A549 (cell line): ENCODE measurements at regions of chr19 and their contacts with region 1.

Region 1: GRCh38 chr19:50897191-50897607 is 14.0 kb downstream of the KLK4 start:
- DNase-seq: no peak
- ATAC-seq: 0 out of 6 replicates have a peak, but pooled peaks of 1 of the 2 experiments have one; percentile 10
- H3K4me3 ChIP-seq: no peak overlapping the region
- H3K27ac ChIP-seq: no peak overlapping the region; a peak in 1 of 6 replicates
- H3K4me1 ChIP-seq: peaks cover 6% of the 10 kb centered on the region; the same call in 1 of the 3 replicates
- CTCF ChIP-seq: no peak
- EP300 ChIP-seq: no peak
- POLR2A ChIP-seq: no peak
- RAD21 ChIP-seq: no peak

Region 2: DNA sequence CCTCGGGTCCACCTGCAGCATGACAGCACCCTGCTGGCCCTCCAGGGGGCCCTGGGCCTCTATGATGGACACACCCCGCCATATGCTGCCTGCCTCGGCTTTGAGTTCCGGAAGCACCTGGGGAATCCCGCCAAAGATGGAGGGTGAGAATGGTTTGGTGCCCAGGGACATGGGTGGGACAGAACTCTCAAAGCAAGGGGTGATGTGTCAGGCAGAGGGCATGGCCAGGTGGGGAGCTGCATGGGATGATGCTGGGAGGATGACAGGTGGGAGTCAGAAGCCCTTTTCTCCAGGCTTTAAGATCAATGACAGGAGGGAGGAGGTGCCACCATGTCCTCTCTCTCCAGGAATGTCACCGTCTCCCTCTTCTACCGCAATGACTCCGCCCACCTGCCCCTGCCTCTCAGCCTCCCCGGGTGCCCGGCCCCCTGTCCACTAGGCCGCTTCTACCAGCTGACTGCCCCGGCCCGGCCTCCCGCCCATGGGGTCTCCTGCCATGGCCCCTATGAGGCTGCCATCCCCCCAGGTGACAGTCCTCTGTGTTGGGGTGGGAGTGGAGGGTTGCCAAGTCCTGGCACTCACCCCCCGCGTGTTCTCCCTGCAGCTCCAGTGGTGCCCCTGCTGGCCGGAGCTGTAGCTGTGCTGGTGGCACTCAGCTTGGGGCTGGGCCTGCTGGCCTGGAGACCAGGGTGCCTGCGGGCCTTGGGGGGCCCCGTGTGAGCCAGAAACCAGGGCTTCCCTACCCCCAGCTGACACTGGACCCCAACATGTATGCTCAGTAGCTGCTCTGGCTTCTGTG is 102.6 kb before region 1 on chr19:
- CTCF ChIA-PET with region 1: no interaction called
- POLR2A ChIA-PET with region 1: no interaction called
- DNase-seq: peak; percentile 67 to 76
- ATAC-seq: peak; percentile 31 to 62
- H3K4me3 ChIP-seq: no peak overlapping the region
- H3K27ac ChIP-seq: no peak overlapping the region
- H3K4me1 ChIP-seq: peaks cover 9% of the 10 kb centered on the region; the same call in 2 of the 3 replicates
- CTCF ChIP-seq: no peak; the same call in 2 of the 3 replicates
- EP300 ChIP-seq: no peak
- POLR2A ChIP-seq: peak; percentile 42
- RAD21 ChIP-seq: no peak

Region 3: DNA sequence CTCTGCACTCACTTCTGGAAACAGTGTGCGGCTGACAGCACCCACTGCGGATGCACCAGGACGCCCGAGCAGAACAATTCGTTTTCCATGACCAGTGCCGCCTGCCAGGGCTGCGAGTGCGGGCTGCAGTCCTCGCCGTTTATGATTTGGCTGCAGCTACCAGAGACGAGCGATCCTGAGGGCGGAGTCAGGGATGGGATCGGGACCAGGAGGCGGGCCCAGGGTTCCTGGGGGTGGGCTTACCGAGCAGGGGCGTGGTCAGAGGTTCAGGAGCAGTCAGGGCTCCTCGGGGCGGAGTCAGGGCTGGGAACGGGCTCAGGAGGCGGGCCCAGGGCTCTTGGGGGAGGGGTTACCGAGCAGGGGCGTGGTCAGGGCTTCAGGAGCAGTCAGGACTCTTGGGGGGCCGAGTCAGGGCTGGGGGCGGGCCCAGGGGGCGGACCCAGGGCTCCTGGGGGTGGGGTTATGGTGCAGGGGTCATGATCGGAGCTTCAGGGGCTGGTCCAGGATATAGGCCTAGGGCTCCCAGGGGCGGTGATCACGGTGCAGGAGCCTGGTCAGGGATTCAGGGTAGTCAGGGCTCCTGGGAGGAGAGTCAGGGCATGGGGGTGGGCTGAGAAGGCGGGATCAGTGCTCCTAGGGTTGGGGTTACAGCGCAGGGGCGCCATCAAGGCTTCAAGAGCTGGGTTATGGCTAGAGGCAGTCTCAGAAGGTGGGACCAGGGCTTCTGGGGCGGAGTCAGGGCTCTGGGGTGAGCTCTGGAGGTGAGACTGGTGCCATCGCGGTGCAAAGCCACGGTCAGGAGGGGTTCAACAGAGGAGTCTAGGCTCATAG is 12.3 kb after region 1 on chr19:
- CTCF ChIA-PET with region 1: interaction called, 17 read pairs
- POLR2A ChIA-PET with region 1: no interaction called
- DNase-seq: peak; percentile 82 to 86
- ATAC-seq: peak; percentile 52 to 90
- H3K4me3 ChIP-seq: peak overlapping the region; percentile 41
- H3K27ac ChIP-seq: peak overlapping the region in 1 of 2 experiments; percentile 26; a peak in 3 of 6 replicates
- H3K4me1 ChIP-seq: peaks cover 10% of the 10 kb centered on the region; the same call in 1 of the 3 replicates
- CTCF ChIP-seq: no peak
- EP300 ChIP-seq: no peak
- POLR2A ChIP-seq: no peak
- RAD21 ChIP-seq: no peak

Region 4: DNA sequence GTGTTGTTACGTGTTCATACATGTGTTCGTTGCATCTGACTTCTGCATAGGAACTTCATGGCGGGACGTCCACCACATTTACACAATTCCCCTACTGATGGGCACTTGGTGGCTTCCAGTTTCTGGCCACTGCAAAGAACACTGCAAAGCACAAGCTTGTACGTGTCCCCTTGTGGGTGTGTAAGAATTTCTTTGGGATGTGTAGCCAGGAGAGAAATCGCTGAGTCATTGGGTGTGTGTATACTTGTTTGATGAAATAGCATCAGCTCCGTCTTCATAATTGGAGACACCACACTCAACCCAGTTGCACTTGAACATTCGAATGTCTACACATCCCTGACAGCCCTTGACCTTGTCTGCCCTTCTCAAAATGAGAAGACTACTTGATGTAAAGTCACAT is 36.4 kb after region 1 on chr19:
- CTCF ChIA-PET with region 1: interaction called, 10 read pairs
- POLR2A ChIA-PET with region 1: no interaction called
- DNase-seq: peak in 1 of 2 experiments; percentile 84
- ATAC-seq: peak in 1 of 2 experiments; percentile 61; a peak in 3 of 6 replicates
- H3K4me3 ChIP-seq: no peak overlapping the region
- H3K27ac ChIP-seq: peak overlapping the region; percentile 64 to 82
- H3K4me1 ChIP-seq: peaks cover 12% of the 10 kb centered on the region
- CTCF ChIP-seq: no peak
- EP300 ChIP-seq: no peak
- POLR2A ChIP-seq: no peak
- RAD21 ChIP-seq: no peak

Region 5: DNA sequence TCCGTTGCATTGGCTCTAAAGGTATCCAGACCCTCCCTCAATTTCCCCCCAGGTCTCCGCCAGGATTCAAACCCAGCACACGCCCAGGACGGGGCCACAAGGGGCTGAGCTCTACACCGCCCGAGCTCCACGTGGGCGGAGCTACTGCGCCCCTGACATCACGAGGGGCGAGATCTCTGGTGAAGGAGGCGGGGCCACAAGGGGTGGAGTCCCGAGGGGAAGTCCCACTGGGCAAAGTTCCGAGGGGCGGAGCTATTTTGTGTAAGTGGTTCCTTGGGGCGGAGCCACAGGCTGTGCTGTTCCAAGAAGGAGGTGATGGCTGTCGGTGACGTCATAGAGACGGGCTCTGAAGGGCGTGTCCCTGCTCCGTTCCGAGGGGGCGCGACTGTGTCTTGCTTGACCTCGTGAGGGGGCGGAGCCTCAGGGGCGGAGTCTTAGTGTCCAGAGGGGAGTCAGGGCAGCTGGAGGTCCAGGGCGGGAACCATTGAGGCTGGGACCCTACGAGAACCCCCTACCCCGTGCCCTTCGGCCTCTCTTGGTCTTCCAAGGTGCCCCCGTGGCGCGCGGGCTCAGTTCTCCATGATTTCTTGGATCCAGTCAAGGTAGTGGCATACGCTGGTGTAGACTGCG is 105.5 kb after region 1 on chr19:
- CTCF ChIA-PET with region 1: no interaction called
- POLR2A ChIA-PET with region 1: no interaction called
- DNase-seq: peak; percentile 92 to 94
- ATAC-seq: peak; percentile 74 to 89
- H3K4me3 ChIP-seq: peak overlapping the region; percentile 35
- H3K27ac ChIP-seq: no peak overlapping the region
- H3K4me1 ChIP-seq: peaks cover 6% of the 10 kb centered on the region; the same call in 2 of the 3 replicates
- CTCF ChIP-seq: no peak
- EP300 ChIP-seq: no peak
- POLR2A ChIP-seq: no peak
- RAD21 ChIP-seq: no peak